ENCODE measurements at regions of chr3 and their contacts with region 1.

Region 1: GRCh38 chr3:159804726-159805410 is 183.8 kb upstream of the IL12A start:
- DNase-seq: no peak
- H3K4me3 ChIP-seq: no peak overlapping the region
- H3K27me3 ChIP-seq: no peaks in the 10 kb centered on the region
- CTCF ChIP-seq: peak; percentile 95

Region 2: GRCh38 chr3:159607856-159608255 is 197.0 kb before region 1 on chr3:
- CTCF ChIA-PET with region 1: interaction called, 11 read pairs
- POLR2A ChIA-PET with region 1: no interaction called
- DNase-seq: no peak
- H3K4me3 ChIP-seq: no peak overlapping the region
- H3K27me3 ChIP-seq: no peaks in the 10 kb centered on the region
- CTCF ChIP-seq: no peak

Region 3: GRCh38 chr3:159616212-159616825 is 188.5 kb before region 1 on chr3:
- CTCF ChIA-PET with region 1: interaction called, 78 read pairs
- POLR2A ChIA-PET with region 1: no interaction called
- DNase-seq: no peak
- H3K4me3 ChIP-seq: no peak overlapping the region
- H3K27me3 ChIP-seq: no peaks in the 10 kb centered on the region
- CTCF ChIP-seq: peak; percentile 72

Region 4: GRCh38 chr3:159624616-159625015 is 180.3 kb before region 1 on chr3:
- CTCF ChIA-PET with region 1: interaction called, 78 read pairs
- POLR2A ChIA-PET with region 1: no interaction called
- DNase-seq: no peak
- H3K4me3 ChIP-seq: no peak overlapping the region
- H3K27me3 ChIP-seq: no peaks in the 10 kb centered on the region
- CTCF ChIP-seq: no peak

Region 5: DNA sequence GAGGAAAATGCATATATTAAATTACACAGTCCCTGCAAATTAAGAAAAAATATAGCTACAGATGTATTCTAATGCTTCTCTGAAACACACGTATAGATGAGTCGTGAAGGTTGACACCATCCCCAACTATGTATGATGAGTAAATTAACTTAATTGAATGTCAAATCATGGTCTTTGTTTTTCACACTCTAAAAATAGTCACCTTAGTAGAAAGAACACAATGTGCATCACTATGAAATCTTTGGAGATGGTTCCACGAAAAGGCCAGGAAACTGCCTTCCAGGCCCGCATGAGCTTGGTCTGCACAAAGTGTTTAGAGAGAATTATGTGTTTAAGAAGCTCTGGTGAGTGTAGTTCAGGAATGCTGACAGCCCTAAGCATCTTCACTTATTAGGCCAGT is 129.6 kb before region 1 on chr3:
- CTCF ChIA-PET with region 1: no interaction called
- POLR2A ChIA-PET with region 1: no interaction called
- DNase-seq: no peak
- H3K4me3 ChIP-seq: no peak overlapping the region
- H3K27me3 ChIP-seq: no peaks in the 10 kb centered on the region
- CTCF ChIP-seq: no peak

Region 6: GRCh38 chr3:159763602-159764489 is 41.0 kb before region 1 on chr3:
- CTCF ChIA-PET with region 1: interaction called, 47 read pairs
- POLR2A ChIA-PET with region 1: no interaction called
- DNase-seq: no peak
- H3K4me3 ChIP-seq: peak overlapping the region; percentile 81
- H3K27me3 ChIP-seq: no peaks in the 10 kb centered on the region
- CTCF ChIP-seq: no peak; the same call in 1 of the 2 replicates

Region 7: DNA sequence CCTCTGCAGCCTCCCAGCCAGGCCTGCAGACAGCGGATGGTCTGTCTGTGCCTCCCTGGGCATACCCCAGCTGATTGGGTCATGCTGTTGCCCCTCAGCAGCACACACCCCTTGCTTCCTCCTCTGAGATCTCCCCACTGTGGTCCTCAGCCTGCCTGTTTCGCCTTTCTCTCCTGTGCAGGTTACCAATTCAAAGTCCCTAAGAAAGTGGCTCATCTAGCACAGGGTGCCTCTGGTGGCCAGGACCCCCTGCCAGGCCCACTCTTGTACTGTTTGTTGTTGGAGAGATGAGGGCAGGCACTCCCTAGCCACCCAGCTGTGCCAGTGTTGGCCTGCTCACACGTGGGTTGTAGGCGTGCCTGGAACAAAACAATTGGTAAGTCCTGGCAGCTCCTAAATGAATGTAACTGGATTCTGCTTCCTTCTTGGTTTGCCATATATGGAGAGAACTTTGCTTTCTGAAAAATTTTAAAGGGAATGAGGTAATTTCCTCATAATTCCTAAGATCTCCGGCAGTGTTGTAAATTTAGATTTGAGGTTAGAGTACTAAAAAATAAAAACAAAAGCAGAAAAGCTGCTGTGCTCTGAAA is 29.4 kb before region 1 on chr3:
- CTCF ChIA-PET with region 1: interaction called, 23 read pairs
- POLR2A ChIA-PET with region 1: no interaction called
- DNase-seq: peak; percentile 61
- H3K4me3 ChIP-seq: no peak overlapping the region
- H3K27me3 ChIP-seq: no peaks in the 10 kb centered on the region
- CTCF ChIP-seq: no peak

Region 8: DNA sequence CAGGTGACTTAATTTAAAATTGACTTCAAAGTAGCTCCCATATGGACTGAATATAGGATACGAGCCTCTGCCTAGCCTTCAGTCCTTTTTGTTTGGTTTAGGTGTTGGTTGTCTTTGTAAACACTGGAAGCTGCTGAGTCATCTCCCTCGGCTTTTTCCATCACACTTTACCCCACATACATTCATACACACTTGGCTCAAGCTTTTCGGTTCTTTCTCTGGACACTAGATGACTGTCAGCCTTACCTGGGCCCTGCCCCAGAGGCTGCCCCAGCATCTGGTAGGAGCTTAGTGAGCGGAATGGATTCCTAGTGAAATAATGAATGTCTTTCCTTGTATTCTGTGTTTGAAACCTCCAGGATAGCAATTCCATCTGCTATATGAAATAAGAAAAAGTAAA is 17.7 kb before region 1 on chr3:
- CTCF ChIA-PET with region 1: interaction called, 15 read pairs
- POLR2A ChIA-PET with region 1: no interaction called
- DNase-seq: peak; percentile 29
- H3K4me3 ChIP-seq: no peak overlapping the region
- H3K27me3 ChIP-seq: no peaks in the 10 kb centered on the region
- CTCF ChIP-seq: no peak

Region 9: GRCh38 chr3:159929435-159930141 is 124.7 kb after region 1 on chr3:
- CTCF ChIA-PET with region 1: no interaction called
- POLR2A ChIA-PET with region 1: no interaction called
- DNase-seq: no peak
- H3K4me3 ChIP-seq: no peak overlapping the region
- H3K27me3 ChIP-seq: no peaks in the 10 kb centered on the region
- CTCF ChIP-seq: peak; percentile 56

Region 10: DNA sequence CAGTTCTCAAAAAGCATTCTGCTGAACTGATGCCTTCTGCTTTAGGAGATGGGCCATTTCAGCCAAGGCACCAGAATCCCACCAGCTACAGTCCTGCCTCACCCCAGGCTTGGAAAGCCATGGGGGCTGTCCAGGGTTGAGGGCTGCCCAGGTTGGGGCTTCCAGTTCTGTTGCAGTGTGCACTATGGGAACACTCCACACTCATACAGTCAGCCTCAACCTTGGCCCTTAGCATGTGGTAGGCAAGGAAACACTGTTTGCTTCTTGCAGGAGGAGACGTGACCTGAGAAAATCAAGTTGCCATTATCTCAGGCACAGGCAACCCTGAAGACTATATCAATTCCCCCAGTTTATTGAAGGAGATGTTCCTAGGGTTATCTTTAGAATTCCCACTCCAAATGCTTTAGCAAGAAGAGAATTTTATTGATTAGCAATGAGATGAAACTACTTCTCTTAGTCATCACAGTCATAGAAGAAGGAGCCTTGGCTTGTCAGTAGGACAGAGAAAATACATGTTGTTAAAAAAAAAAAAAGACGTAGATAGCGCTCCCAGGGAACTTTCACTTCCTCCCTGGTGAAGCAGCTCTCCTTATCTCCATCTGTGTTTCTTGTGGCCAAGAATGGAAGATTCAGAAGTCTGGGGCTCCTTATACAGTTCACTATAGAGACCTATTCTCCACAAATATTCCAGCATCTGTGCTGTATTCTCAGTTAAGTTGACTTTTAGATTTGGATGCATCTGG is 145.5 kb after region 1 on chr3:
- CTCF ChIA-PET with region 1: no interaction called
- POLR2A ChIA-PET with region 1: no interaction called
- DNase-seq: no peak
- H3K4me3 ChIP-seq: no peak overlapping the region
- H3K27me3 ChIP-seq: no peaks in the 10 kb centered on the region
- CTCF ChIP-seq: no peak

Measured in BJ (cell line).